ENCODE measurements at regions of chr2 and their contacts with region 1.

Region 1: GRCh38 chr2:32063310-32064161 is at the start of gene SPAST:
- DNase-seq: peak; percentile 98 to 99
- H3K4me3 ChIP-seq: peak within 1 kb of the TSS; percentile 94
- H3K4me3 Mint-ChIP-seq: peak within 1 kb of the TSS; percentile 71
- H3K27ac Mint-ChIP-seq: peak within 1 kb of the TSS; percentile 78
- H3K4me1 ChIP-seq: no peaks in the 10 kb centered on the region; the same call in 1 of the 2 replicates
- H3K4me1 Mint-ChIP-seq: peaks cover 7% of the 10 kb centered on the region
- H3K27me3 ChIP-seq: no peaks in the 10 kb centered on the region
- H3K27me3 Mint-ChIP-seq: no peaks in the 10 kb centered on the region
- CTCF ChIP-seq: peak; percentile 51 to 58
- total RNA-seq, gene SPAST: 29.7 and 31.7 TPM in 2 replicates

Region 2: GRCh38 chr2:31688282-31688681 is 375.3 kb before region 1 on chr2:
- CTCF ChIA-PET with region 1: no interaction called
- POLR2A ChIA-PET with region 1: no interaction called
- intact Hi-C with region 1: no loop called
- DNase-seq: no peak
- H3K4me3 ChIP-seq: no peak overlapping the region
- H3K4me3 Mint-ChIP-seq: no peak overlapping the region
- H3K27ac Mint-ChIP-seq: no peak overlapping the region
- H3K4me1 ChIP-seq: no peaks in the 10 kb centered on the region
- H3K4me1 Mint-ChIP-seq: no peaks in the 10 kb centered on the region
- H3K27me3 ChIP-seq: no peaks in the 10 kb centered on the region
- H3K27me3 Mint-ChIP-seq: no peaks in the 10 kb centered on the region
- CTCF ChIP-seq: peak; percentile 29 to 50

Region 3: GRCh38 chr2:31945572-31945935 is 118.0 kb before region 1 on chr2:
- CTCF ChIA-PET with region 1: no interaction called
- POLR2A ChIA-PET with region 1: no interaction called
- intact Hi-C with region 1: loop called (anchors 1 kb)
- DNase-seq: peak in 1 of 2 experiments; percentile 23
- H3K4me3 ChIP-seq: no peak overlapping the region
- H3K4me3 Mint-ChIP-seq: no peak overlapping the region
- H3K27ac Mint-ChIP-seq: peak overlapping the region; percentile 66
- H3K4me1 ChIP-seq: peaks cover 53% of the 10 kb centered on the region
- H3K4me1 Mint-ChIP-seq: peaks cover 47% of the 10 kb centered on the region
- H3K27me3 ChIP-seq: no peaks in the 10 kb centered on the region
- H3K27me3 Mint-ChIP-seq: no peaks in the 10 kb centered on the region
- CTCF ChIP-seq: no peak

Region 4: GRCh38 chr2:32039447-32040219 is 23.9 kb before region 1 on chr2 and contains the start of gene DPY30:
- CTCF ChIA-PET with region 1: interaction called, 18 read pairs
- POLR2A ChIA-PET with region 1: interaction called, 79 read pairs
- intact Hi-C with region 1: loop called (anchors 1 kb)
- DNase-seq: peak; percentile 95
- H3K4me3 ChIP-seq: peak within 1 kb of the TSS; percentile 91
- H3K4me3 Mint-ChIP-seq: peak within 1 kb of the TSS; percentile 100
- H3K27ac Mint-ChIP-seq: peak within 1 kb of the TSS; percentile 95
- H3K4me1 ChIP-seq: peaks cover 9% of the 10 kb centered on the region; the same call in 1 of the 2 replicates
- H3K4me1 Mint-ChIP-seq: no peaks in the 10 kb centered on the region
- H3K27me3 ChIP-seq: no peaks in the 10 kb centered on the region
- H3K27me3 Mint-ChIP-seq: no peaks in the 10 kb centered on the region
- CTCF ChIP-seq: peak in 1 of 2 experiments; percentile 15
- total RNA-seq, gene DPY30: 125 and 136 TPM in 2 replicates

Region 5: DNA sequence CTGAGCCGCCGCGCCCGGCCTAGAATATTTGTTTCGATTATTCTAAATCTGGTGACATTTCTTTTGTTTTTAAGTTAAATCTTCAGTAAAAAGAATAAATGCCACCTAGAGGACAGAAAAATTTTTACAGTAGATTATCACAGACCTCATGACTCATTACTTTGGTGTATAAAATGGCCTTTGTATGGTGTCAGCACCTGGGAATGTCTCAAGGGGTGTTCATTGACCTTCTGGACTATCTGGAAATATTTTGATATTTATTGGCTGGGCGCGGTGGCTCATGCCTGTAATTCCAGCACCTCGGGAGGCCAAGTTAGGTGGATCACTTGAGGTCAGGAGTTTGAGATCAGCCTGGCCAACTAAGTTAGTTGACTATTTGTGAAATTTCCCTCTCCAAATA is 71.9 kb after region 1 on chr2:
- CTCF ChIA-PET with region 1: no interaction called
- POLR2A ChIA-PET with region 1: no interaction called
- intact Hi-C with region 1: loop called (anchors 2 kb)
- DNase-seq: peak; percentile 81 to 88
- H3K4me3 ChIP-seq: no peak overlapping the region
- H3K4me3 Mint-ChIP-seq: peak overlapping the region; percentile 60
- H3K27ac Mint-ChIP-seq: peak overlapping the region; percentile 97
- H3K4me1 ChIP-seq: peaks cover 16% of the 10 kb centered on the region
- H3K4me1 Mint-ChIP-seq: peaks cover 13% of the 10 kb centered on the region
- H3K27me3 ChIP-seq: no peaks in the 10 kb centered on the region
- H3K27me3 Mint-ChIP-seq: no peaks in the 10 kb centered on the region
- CTCF ChIP-seq: peak; percentile 20 to 45

Region 6: GRCh38 chr2:32356735-32357644 is 293.5 kb after region 1 on chr2 and contains the start of gene BIRC6:
- CTCF ChIA-PET with region 1: no interaction called
- POLR2A ChIA-PET with region 1: no interaction called
- intact Hi-C with region 1: loop called (anchors 10 kb)
- DNase-seq: peak; percentile 99 to 100
- H3K4me3 ChIP-seq: peak within 1 kb of the TSS; percentile 100
- H3K4me3 Mint-ChIP-seq: peak within 1 kb of the TSS; percentile 82
- H3K27ac Mint-ChIP-seq: peak within 1 kb of the TSS; percentile 78
- H3K4me1 ChIP-seq: peaks cover 16% of the 10 kb centered on the region
- H3K4me1 Mint-ChIP-seq: peaks cover 30% of the 10 kb centered on the region
- H3K27me3 ChIP-seq: no peaks in the 10 kb centered on the region
- H3K27me3 Mint-ChIP-seq: no peaks in the 10 kb centered on the region
- CTCF ChIP-seq: no peak
- total RNA-seq, gene BIRC6: 96.7 and 100 TPM in 2 replicates

Measured in Caco-2 (cell line).